PC-9 (cell line): ENCODE measurements at regions of chr3 and their contacts with region 1.

Region 1: DNA sequence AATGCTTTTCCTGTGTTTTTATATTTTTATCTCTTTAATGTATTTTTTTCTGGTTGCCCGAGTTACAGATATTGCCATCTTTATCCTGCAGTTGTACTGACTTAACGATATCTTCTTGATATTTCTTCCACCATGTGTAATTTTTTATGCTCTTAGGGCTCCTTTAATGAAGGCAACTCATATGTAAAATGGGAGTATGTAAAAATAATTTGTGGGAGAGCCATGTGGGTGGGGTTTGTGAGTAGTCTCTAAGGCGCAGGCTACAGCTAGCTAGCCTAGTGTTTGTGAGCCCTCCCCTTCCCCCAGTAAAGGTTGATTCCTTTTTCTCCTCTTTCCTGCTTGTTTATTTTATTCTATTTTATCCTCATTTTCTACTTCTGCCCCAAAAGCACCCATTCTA is 38.1 kb downstream of the UBE2E1 start:
- DNase-seq: no peak
- H3K4me3 ChIP-seq: no peak overlapping the region
- H3K27ac ChIP-seq: no peak overlapping the region
- H3K4me1 ChIP-seq: no peaks in the 10 kb centered on the region
- H3K27me3 ChIP-seq: no peaks in the 10 kb centered on the region
- CTCF ChIP-seq: no peak

Region 2: GRCh38 chr3:23826382-23827064 is 17.3 kb before region 1 on chr3:
- CTCF ChIA-PET with region 1: no interaction called
- POLR2A ChIA-PET with region 1: no interaction called
- intact Hi-C with region 1: loop called (anchors 2 kb)
- DNase-seq: no peak
- H3K4me3 ChIP-seq: no peak overlapping the region
- H3K27ac ChIP-seq: 0 out of 2 replicates have a peak overlapping the region, but pooled peaks have one; percentile 20
- H3K4me1 ChIP-seq: 0 out of 2 replicates have a peak, but pooled peaks cover 6% of the 10 kb centered on the region
- H3K27me3 ChIP-seq: no peaks in the 10 kb centered on the region
- CTCF ChIP-seq: no peak